Gastrocnemius medialis (tissue), 4 donors: ENCODE measurements at regions of chr7 and their contacts with region 1.

Region 1: GRCh38 chr7:26365077-26365900 is 73.6 kb downstream of the SNX10 start:
- DNase-seq: peak; percentile 32 to 34
- ATAC-seq: peak; percentile 81 to 84
- H3K4me3 ChIP-seq: no peak overlapping the region
- H3K27ac ChIP-seq: no peak overlapping the region
- H3K4me1 ChIP-seq: no peaks in the 10 kb centered on the region
- H3K27me3 ChIP-seq: peaks cover 6 to 7% (median 6%) of the 10 kb centered on the region in 3 donors
- CTCF ChIP-seq: peak; percentile 62 to 79 (median 74)
- POLR2A ChIP-seq: no peak

Region 2: DNA sequence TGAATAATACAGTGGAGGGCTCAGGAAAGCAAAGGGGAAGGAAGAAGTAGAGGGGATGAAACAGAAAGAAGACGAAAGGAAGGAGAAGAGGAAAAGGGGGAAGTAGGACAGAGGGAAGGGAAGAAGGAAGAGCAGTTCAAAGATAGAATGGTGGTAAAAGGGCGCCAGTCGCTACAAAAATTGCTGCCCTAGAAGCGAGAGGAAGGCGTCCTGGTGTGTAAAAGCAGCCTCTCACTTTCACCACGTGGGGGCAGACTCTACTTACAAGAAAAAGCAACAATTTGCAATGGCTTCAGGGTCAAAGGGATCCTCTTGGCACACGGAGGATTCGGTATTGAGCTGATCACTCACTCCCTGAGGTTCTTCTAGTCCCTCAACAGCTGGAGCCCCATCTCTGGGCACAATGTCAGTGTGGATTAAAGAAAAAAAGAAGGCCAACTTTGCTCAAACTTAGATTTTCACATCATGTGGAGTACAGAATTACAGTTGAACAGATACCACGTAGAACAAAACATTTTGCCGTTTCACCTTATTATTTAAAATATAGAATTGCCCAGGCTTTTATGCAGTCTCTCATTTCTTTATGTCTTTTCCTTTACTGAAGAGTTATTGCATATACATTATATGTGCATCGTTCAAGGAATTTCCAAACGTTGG is 1105.6 kb before region 1 on chr7:
- in situ Hi-C with region 1: no loop called
- intact Hi-C with region 1: loop called (anchors 10 kb)
- DNase-seq: peak; percentile 20 to 55
- ATAC-seq: peak; percentile 69 to 94
- H3K4me3 ChIP-seq: no peak overlapping the region
- H3K27ac ChIP-seq: no peak overlapping the region
- H3K4me1 ChIP-seq: peaks cover 0 to 7% of the 10 kb centered on the region in 2 donors
- H3K27me3 ChIP-seq: no peaks in the 10 kb centered on the region
- CTCF ChIP-seq: peak; percentile 49 to 77 (median 74)
- POLR2A ChIP-seq: no peak

Region 3: GRCh38 chr7:25894902-25895791 is 470.1 kb before region 1 on chr7:
- in situ Hi-C with region 1: loop called (anchors 5 to 10 kb)
- intact Hi-C with region 1: loop called (anchors 1 kb)
- DNase-seq: peak; percentile 21 to 61
- ATAC-seq: peak; percentile 67 to 73
- H3K4me3 ChIP-seq: peak overlapping the region; percentile 38 to 62 (median 47)
- H3K27ac ChIP-seq: peak overlapping the region; percentile 26 to 61 (median 54)
- H3K4me1 ChIP-seq: peaks cover 7 to 9% of the 10 kb centered on the region in 2 donors
- H3K27me3 ChIP-seq: no peaks in the 10 kb centered on the region
- CTCF ChIP-seq: peak; percentile 50 to 84 (median 72)
- POLR2A ChIP-seq: no peak

Region 4: GRCh38 chr7:26200444-26201246 is 164.6 kb before region 1 on chr7 and contains the start of gene HNRNPA2B1:
- in situ Hi-C with region 1: no loop called
- intact Hi-C with region 1: loop called (anchors 5 kb)
- DNase-seq: peak; percentile 95
- ATAC-seq: peak; percentile 82 to 86
- H3K4me3 ChIP-seq: peak within 1 kb of the TSS; percentile 79 to 98 (median 94)
- H3K27ac ChIP-seq: peak within 1 kb of the TSS; percentile 97 to 100 (median 98)
- H3K4me1 ChIP-seq: peaks cover 39 to 50% of the 10 kb centered on the region in 2 donors
- H3K27me3 ChIP-seq: no peaks in the 10 kb centered on the region
- CTCF ChIP-seq: peak in 1 of 5 experiments; percentile 15
- POLR2A ChIP-seq: peak; percentile 100
- total RNA-seq, gene HNRNPA2B1: 155 to 242 (median 166) TPM

Region 5: DNA sequence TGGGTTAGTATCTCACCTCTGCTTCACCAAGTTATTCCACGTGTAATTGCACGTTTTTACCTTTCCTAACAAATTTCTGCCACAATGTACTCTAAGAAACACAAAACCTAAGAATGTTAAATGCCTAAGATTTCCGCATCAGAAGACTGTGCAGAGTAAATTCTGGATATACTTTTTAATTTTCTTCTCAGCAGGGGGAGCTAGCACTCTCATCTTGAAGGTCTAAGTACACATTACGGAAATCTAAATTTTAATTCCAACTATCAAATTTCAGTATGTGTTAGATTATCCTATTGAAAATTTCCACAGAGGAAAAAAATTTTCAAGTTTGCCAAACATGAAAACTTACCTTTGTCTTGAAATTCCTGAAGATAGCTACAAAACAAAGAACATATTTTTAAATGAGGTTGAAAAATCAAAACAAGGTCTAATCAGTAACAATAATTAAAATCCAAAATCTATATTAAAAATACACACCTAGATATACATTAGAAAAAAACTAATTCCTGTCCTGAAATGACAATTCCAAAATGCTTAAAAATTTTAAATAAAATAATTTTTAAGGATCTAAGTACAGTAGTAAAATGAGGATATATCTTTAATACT is 488.6 kb after region 1 on chr7:
- in situ Hi-C with region 1: loop called in 3 of 4 experiments (anchors 10 kb)
- intact Hi-C with region 1: no loop called
- DNase-seq: no peak
- ATAC-seq: peak; percentile 86 to 93
- H3K4me3 ChIP-seq: no peak overlapping the region
- H3K27ac ChIP-seq: no peak overlapping the region
- H3K4me1 ChIP-seq: no peaks in the 10 kb centered on the region
- H3K27me3 ChIP-seq: peaks cover 35 to 53% (median 52%) of the 10 kb centered on the region in 3 donors
- CTCF ChIP-seq: peak; percentile 40 to 73 (median 63)
- POLR2A ChIP-seq: no peak

Region 6: GRCh38 chr7:27150568-27151340 is 785.5 kb after region 1 on chr7:
- in situ Hi-C with region 1: loop called in 3 of 4 experiments (anchors 10 kb)
- intact Hi-C with region 1: no loop called
- DNase-seq: peak; percentile 66 to 78
- ATAC-seq: peak; percentile 65 to 69
- H3K4me3 ChIP-seq: peak overlapping the region; percentile 64 to 75 (median 70)
- H3K27ac ChIP-seq: peak overlapping the region; percentile 90 to 96 (median 94)
- H3K4me1 ChIP-seq: peaks cover 56 to 70% of the 10 kb centered on the region in 2 donors
- H3K27me3 ChIP-seq: no peaks in the 10 kb centered on the region
- CTCF ChIP-seq: peak; percentile 86 to 92 (median 89)
- POLR2A ChIP-seq: peak; percentile 84 to 87